Common myeloid progenitor, CD34-positive (primary cell): ENCODE measurements at regions of chr22 and their contacts with region 1.

Region 1: GRCh38 chr22:25172153-25172552 is 27.5 kb upstream of the CRYBB3 start:
- DNase-seq: peak; percentile 26 to 36 (median 31)
- H3K4me3 ChIP-seq: no peak overlapping the region
- H3K27ac ChIP-seq: no peak overlapping the region
- H3K4me1 ChIP-seq: no peaks in the 10 kb centered on the region
- H3K27me3 ChIP-seq: no peaks in the 10 kb centered on the region

Region 2: DNA sequence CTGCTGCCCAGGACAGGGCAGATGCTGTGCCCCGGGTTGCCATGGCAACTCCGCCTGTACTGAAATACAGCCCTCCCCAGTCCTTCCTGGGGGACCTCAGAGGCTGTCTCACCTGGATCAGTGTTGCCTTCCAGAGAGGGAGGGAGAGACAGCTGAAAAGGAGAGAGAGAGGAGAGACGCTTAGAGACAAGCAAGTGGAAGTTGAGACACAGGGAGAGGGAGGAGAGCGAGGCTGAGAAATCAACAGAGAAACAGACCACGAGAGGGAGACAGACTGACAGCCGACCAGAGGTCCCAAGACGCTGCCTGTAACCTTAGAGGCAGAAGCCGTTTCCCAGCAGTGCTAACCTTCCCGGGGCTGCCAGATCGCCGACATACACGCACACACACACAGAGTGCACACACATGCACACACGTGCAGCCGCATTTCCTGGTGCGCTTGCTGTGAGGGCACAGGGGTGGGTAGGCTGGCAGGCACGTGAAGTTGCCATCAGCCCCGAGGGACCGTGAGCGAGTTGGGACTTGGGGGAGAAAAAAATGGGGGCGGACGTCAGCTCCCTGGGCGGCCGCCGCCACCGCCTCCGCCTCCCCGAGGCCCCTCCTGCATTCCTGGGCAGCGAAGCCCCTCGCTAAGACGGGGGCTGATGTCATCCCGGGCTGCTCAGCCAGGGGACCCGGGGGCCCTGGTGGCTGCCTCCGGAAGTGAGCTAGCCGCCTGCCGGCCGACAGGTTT is 61.1 kb before region 1 on chr22:
- CTCF ChIA-PET with region 1: interaction called, 11 read pairs
- POLR2A ChIA-PET with region 1: no interaction called
- DNase-seq: peak; percentile 83 to 92 (median 87)
- H3K4me3 ChIP-seq: peak overlapping the region; percentile 47 to 80 (median 58)
- H3K27ac ChIP-seq: no peak overlapping the region
- H3K4me1 ChIP-seq: peaks cover 0 to 18% (median 12%) of the 10 kb centered on the region in 4 experiments
- H3K27me3 ChIP-seq: peaks cover 0 to 21% (median 11%) of the 10 kb centered on the region in 5 experiments

Region 3: GRCh38 chr22:25159028-25159427 is 13.1 kb before region 1 on chr22:
- CTCF ChIA-PET with region 1: no interaction called
- POLR2A ChIA-PET with region 1: no interaction called
- DNase-seq: no peak
- H3K4me3 ChIP-seq: no peak overlapping the region
- H3K27ac ChIP-seq: no peak overlapping the region
- H3K4me1 ChIP-seq: no peaks in the 10 kb centered on the region
- H3K27me3 ChIP-seq: no peaks in the 10 kb centered on the region